ENCODE measurements at regions of chr17 and their contacts with region 1.

Region 1: DNA sequence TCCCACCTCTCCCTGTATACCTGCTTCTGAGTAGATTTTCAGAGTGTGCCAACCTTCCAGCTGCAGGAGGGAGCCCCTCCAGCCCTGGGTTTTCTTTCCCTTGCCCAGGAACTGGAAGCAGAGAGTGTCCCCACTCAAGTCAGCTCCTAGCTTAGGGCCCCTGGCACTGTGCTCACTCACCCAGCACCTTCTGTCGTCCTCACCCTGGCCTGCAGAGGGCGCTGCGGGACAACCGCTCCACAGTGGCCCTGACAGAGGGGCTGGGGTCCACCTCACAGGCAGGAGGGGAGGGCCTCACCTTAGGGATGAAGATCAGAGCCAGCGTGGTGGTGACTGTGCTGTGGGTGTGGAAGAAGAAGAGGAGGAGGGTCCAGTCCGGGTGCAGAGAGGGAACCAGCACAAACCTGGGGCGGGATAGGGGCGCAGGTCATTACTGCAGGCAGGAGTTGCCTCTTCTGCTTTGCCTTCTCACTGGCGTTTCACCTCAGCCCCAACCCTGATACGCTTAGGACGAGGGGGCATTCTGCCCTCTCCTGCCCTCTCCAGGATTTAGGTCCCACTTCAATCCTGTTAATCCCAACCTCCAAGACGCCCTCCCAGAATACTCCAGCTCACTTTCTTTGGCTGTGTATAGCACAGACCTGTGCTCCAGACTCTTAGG is 10.0 kb downstream of the GPR179 start:
- H3K4me3 ChIP-seq: no peak overlapping the region
- H3K27ac ChIP-seq: no peak overlapping the region
- H3K4me1 ChIP-seq: no peaks in the 10 kb centered on the region
- CTCF ChIP-seq: peak; percentile 83

Region 2: GRCh38 chr17:38322091-38322779 is 11.5 kb before region 1 on chr17:
- CTCF ChIA-PET with region 1: interaction called, 124 read pairs
- POLR2A ChIA-PET with region 1: interaction called, 8 read pairs
- H3K4me3 ChIP-seq: no peak overlapping the region
- H3K27ac ChIP-seq: no peak overlapping the region
- H3K4me1 ChIP-seq: peaks cover 4% of the 10 kb centered on the region
- CTCF ChIP-seq: no peak

Region 3: GRCh38 chr17:38364741-38365140 is 31.0 kb after region 1 on chr17:
- CTCF ChIA-PET with region 1: interaction called, 10 read pairs
- POLR2A ChIA-PET with region 1: no interaction called
- H3K4me3 ChIP-seq: no peak overlapping the region
- H3K27ac ChIP-seq: no peak overlapping the region
- H3K4me1 ChIP-seq: no peaks in the 10 kb centered on the region
- CTCF ChIP-seq: no peak

Region 4: DNA sequence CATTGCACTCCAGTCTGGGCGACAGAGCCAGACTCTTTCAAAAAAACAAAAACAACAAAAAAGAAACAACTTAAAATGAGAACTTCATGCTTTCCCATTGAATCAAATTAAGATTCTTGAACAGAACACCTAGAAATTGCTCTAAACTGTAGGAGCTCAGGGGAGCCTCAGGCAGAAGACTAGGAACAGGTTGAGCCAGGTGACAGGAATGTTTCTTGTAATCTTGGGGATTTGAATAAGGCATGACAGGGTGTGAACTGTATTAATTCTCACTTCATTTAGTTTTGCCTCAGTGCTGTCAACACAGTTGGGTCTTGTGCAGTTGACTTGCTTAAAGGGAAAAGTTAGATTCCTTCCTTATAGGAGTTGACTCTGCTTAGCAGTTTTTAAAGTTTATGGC is 45.7 kb after region 1 on chr17:
- CTCF ChIA-PET with region 1: interaction called, 12 read pairs
- POLR2A ChIA-PET with region 1: no interaction called
- H3K4me3 ChIP-seq: no peak overlapping the region
- H3K27ac ChIP-seq: no peak overlapping the region
- H3K4me1 ChIP-seq: no peaks in the 10 kb centered on the region
- CTCF ChIP-seq: no peak

Region 5: DNA sequence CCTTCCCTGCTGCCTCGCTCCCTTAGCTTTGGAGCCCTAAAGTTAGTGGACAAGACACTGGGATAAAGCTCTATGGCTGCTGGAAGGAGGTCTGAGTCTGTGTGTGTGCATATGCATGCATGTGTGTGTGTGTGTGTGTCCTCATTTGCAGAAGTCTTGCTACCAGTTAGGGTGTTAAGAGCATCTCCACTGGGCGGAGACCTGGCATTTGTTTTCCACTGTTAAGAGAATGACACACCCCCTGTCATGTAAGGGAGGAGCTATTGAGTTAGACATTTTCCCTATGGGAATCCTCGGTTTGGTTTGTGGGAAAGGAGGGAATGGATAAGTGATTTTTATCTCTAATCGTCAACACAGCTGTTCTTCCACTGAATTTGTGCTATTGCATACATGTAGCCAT is 69.7 kb after region 1 on chr17:
- CTCF ChIA-PET with region 1: interaction called, 15 read pairs
- POLR2A ChIA-PET with region 1: no interaction called
- H3K4me3 ChIP-seq: no peak overlapping the region
- H3K27ac ChIP-seq: no peak overlapping the region
- H3K4me1 ChIP-seq: peaks cover 7% of the 10 kb centered on the region; the same call in 1 of the 2 replicates
- CTCF ChIP-seq: no peak